ENCODE measurements at regions of chr1 and their contacts with region 1.

Region 1: GRCh38 chr1:31644560-31645273 is at the start of gene PEF1:
- DNase-seq: peak; percentile 98
- H3K4me3 ChIP-seq: peak within 1 kb of the TSS; percentile 53 to 93 (median 68)
- H3K27ac ChIP-seq: peak within 1 kb of the TSS; percentile 90
- H3K4me1 ChIP-seq: peaks cover 22% of the 10 kb centered on the region
- H3K27me3 ChIP-seq: no peaks in the 10 kb centered on the region
- CTCF ChIP-seq: no peak
- POLR2A ChIP-seq: peak; percentile 33
- total RNA-seq, gene PEF1: 66.5 and 73.3 TPM in 2 replicates

Region 2: GRCh38 chr1:31587720-31588394 is 56.9 kb before region 1 on chr1:
- CTCF ChIA-PET with region 1: interaction called, 5 read pairs
- POLR2A ChIA-PET with region 1: interaction called, 3 read pairs
- dilution Hi-C with region 1: no loop called
- intact Hi-C with region 1: loop called (anchors 2 kb)
- DNase-seq: peak; percentile 86
- H3K4me3 ChIP-seq: no peak overlapping the region
- H3K27ac ChIP-seq: peak overlapping the region; percentile 92
- H3K4me1 ChIP-seq: peaks cover 39% of the 10 kb centered on the region
- H3K27me3 ChIP-seq: no peaks in the 10 kb centered on the region
- CTCF ChIP-seq: peak; percentile 71 to 92
- POLR2A ChIP-seq: peak; percentile 81

Region 3: DNA sequence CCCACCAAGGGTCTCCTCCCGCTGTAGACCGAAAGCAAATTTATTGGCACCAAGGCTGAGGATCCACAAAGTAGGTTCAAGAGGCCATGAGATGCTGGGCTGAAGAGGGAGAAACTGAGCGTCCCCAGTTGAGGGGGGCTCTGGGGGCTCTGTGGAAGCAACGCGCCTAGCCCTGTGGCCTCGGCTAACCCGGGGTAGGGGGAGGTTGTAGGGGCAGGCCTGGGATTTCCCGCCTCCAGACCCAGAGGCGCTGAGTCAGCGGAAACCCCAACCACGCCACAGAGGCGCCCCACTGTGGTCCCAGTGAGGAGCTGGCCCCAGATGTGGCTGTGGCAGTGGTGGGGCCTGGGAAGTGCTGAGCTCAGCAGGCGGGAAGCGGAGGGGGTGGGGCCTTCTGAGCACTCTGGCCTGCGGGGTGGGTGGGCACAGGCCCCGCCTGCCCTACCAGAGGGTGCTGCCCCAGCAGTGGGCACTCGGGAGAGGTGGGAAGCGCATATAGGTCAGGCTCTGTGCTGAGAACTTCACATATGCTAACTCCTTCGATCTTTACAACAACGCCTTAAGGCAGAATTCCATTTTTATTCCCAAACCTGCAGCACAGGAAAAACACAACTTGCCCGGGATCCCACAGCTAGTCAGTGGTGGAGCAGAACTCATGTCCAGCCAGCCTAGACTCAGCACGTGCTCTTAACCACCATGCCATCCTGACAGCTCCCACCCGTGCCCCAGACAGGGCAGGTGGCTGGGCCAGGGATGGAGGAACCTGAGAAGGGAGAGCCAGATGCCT is 60.6 kb after region 1 on chr1:
- CTCF ChIA-PET with region 1: no interaction called
- POLR2A ChIA-PET with region 1: no interaction called
- dilution Hi-C with region 1: no loop called
- intact Hi-C with region 1: no loop called
- DNase-seq: no peak
- H3K4me3 ChIP-seq: no peak overlapping the region
- H3K27ac ChIP-seq: no peak overlapping the region
- H3K4me1 ChIP-seq: peaks cover 9% of the 10 kb centered on the region
- H3K27me3 ChIP-seq: peaks cover 0 to 3% of the 10 kb centered on the region in 2 experiments
- CTCF ChIP-seq: peak; percentile 5 to 12
- POLR2A ChIP-seq: no peak

Measured in endothelial cell of umbilical vein (primary cell).